Sigmoid colon (tissue), 7 donors: ENCODE measurements at regions of chr2 and their contacts with region 1.

Region 1: DNA sequence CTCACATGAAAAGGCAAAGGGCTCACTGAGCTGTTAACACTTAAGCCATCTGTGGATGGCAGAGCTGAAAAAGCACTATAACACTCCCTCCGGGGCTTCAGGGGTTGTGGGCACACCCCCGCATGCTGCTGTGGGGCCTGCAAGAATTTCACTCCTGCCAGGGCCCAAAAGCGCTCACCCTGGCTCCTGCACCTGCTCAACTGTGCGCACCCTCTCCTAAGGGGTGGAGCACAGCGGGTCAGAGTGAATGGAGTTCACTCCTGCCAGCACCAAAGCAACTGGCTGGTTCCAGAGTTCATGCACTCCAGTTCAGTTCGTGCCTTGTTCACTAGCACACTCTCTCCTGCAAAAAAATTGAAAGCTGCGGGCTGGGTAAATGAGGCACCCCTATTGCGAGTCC is 814.2 kb upstream of the SLC39A10 start:
- DNase-seq: no peak
- H3K4me3 ChIP-seq: no peak overlapping the region
- H3K27ac ChIP-seq: no peak overlapping the region
- H3K4me1 ChIP-seq: no peaks in the 10 kb centered on the region
- H3K27me3 ChIP-seq: no peaks in the 10 kb centered on the region
- CTCF ChIP-seq: no peak
- EP300 ChIP-seq: no peak
- POLR2A ChIP-seq: no peak

Region 2: DNA sequence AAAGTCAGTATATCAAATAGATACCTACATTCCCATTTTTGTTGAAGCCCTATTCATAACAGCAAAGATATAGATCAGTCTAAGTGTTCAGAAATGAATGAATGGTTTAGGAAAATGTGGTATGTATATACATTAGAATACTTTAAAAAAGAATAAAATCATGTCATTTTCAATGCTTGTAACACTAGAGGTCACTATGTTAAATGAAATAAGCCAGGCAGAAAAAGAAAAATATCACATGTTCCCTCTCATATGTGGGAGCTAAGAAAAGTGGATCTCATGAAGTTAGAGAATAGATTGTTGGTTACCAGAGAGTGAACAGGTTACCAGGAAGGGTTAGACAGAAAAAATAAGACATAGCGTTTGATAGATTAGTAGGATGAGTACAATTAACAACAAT is 296.9 kb before region 1 on chr2:
- intact Hi-C with region 1: no loop called
- DNase-seq: no peak
- H3K4me3 ChIP-seq: no peak overlapping the region
- H3K27ac ChIP-seq: no peak overlapping the region
- H3K4me1 ChIP-seq: no peaks in the 10 kb centered on the region
- H3K27me3 ChIP-seq: no peaks in the 10 kb centered on the region
- CTCF ChIP-seq: no peak
- EP300 ChIP-seq: no peak
- POLR2A ChIP-seq: no peak

Region 3: GRCh38 chr2:194870974-194871535 is 28.2 kb after region 1 on chr2:
- intact Hi-C with region 1: loop called (anchors 2 kb)
- DNase-seq: no peak
- H3K4me3 ChIP-seq: no peak overlapping the region
- H3K27ac ChIP-seq: no peak overlapping the region
- H3K4me1 ChIP-seq: no peaks in the 10 kb centered on the region
- H3K27me3 ChIP-seq: no peaks in the 10 kb centered on the region
- CTCF ChIP-seq: no peak
- EP300 ChIP-seq: no peak
- POLR2A ChIP-seq: no peak